Activated CD4-positive, alpha-beta memory T cell treated with anti-CD3 and anti-CD28 coated beads, Interleukin-2, amount 10 ng/mL, durations not matched to agents 7 days and 5 days (primary cell): ENCODE measurements at regions of chr6 and their contacts with region 1.

Region 1: GRCh38 chr6:137707590-137708360 is 159.3 kb upstream of the TNFAIP3 start:
- DNase-seq: peak; percentile 91
- H3K4me3 Mint-ChIP-seq: peak overlapping the region; percentile 59
- H3K27ac Mint-ChIP-seq: peak overlapping the region; percentile 86
- H3K4me1 Mint-ChIP-seq: peaks cover 71% of the 10 kb centered on the region
- H3K27me3 Mint-ChIP-seq: no peaks in the 10 kb centered on the region

Region 2: GRCh38 chr6:137656735-137657134 is 51.0 kb before region 1 on chr6:
- CTCF ChIA-PET with region 1: no interaction called
- POLR2A ChIA-PET with region 1: no interaction called
- DNase-seq: no peak
- H3K4me3 Mint-ChIP-seq: no peak overlapping the region
- H3K27ac Mint-ChIP-seq: peak overlapping the region; percentile 59
- H3K4me1 Mint-ChIP-seq: peaks cover 28% of the 10 kb centered on the region
- H3K27me3 Mint-ChIP-seq: no peaks in the 10 kb centered on the region

Region 3: DNA sequence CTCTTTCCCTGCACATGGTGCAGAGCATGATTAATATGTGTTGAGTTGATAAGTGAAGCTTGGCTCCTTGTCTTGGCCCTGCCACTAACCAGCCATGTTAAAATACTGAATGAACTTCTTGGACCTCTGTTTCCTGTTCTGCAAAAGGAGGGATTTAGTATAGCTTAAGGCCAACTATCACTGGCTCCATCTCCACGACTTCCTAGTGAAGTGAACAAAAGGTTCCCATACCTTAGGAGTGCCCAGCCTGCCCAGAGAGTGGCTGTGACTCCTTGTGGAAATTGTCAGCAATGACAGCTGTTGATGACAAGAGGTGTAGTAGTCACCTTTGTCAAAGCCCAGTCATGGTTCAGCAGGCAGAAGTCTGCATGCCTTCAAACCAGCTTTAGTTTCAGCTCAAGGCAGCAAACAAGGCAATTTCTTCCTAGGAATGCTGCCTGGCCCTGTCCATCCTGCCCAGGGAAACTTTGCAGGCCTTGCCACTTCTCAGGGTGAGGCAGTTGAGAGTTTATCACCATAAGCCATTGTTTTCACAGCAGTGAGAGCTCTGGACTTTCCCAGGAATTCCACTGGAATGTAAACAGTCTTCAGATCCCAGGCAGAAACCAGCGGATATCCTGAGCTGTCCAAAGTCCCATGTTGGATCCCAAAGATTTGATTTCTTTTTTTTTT is 10.4 kb before region 1 on chr6:
- CTCF ChIA-PET with region 1: interaction called, 7 read pairs
- POLR2A ChIA-PET with region 1: interaction called, 11 read pairs
- DNase-seq: no peak
- H3K4me3 Mint-ChIP-seq: no peak overlapping the region
- H3K27ac Mint-ChIP-seq: peak overlapping the region; percentile 52
- H3K4me1 Mint-ChIP-seq: peaks cover 53% of the 10 kb centered on the region
- H3K27me3 Mint-ChIP-seq: no peaks in the 10 kb centered on the region

Region 4: GRCh38 chr6:137938770-137939379 is 231.1 kb after region 1 on chr6:
- CTCF ChIA-PET with region 1: interaction called, 25 read pairs
- POLR2A ChIA-PET with region 1: interaction called, 5 read pairs
- DNase-seq: no peak
- H3K4me3 Mint-ChIP-seq: no peak overlapping the region
- H3K27ac Mint-ChIP-seq: peak overlapping the region; percentile 3
- H3K4me1 Mint-ChIP-seq: peaks cover 21% of the 10 kb centered on the region
- H3K27me3 Mint-ChIP-seq: no peaks in the 10 kb centered on the region

Region 5: DNA sequence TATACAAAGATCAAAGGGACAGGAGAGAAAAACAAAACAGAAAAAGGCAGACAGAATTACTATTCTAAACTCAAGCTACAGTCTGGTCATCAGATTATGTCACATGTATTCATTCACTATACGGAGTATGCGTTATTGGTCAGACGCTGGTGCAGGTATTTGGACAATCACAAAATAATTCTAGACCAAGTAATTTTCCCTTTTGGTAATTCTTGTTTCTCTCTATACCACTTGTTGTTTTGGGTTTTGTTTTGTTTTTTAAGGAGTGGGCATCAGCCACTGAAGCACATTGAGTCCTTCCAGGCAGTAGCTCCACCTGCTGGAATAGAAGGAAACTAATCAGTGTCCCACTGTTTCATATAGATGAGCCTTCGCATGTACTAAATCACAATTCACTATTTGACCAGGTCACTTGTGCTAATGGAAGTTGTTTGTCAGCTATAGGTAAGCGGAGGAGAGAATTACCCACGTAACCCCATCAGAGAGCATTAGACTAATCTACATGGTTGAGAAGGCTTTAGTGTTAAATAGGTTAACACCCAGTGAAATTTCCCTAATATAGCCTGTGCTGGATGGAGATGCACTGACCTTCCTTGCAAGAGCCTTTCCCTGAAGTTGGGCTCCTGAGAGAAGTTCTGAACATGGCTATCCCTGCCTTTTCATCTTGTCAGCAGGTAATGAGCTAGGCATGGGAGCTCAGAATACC is 237.2 kb after region 1 on chr6:
- CTCF ChIA-PET with region 1: interaction called, 25 read pairs
- POLR2A ChIA-PET with region 1: interaction called, 5 read pairs
- DNase-seq: no peak
- H3K4me3 Mint-ChIP-seq: no peak overlapping the region
- H3K27ac Mint-ChIP-seq: no peak overlapping the region
- H3K4me1 Mint-ChIP-seq: peaks cover 33% of the 10 kb centered on the region
- H3K27me3 Mint-ChIP-seq: no peaks in the 10 kb centered on the region

Region 6: DNA sequence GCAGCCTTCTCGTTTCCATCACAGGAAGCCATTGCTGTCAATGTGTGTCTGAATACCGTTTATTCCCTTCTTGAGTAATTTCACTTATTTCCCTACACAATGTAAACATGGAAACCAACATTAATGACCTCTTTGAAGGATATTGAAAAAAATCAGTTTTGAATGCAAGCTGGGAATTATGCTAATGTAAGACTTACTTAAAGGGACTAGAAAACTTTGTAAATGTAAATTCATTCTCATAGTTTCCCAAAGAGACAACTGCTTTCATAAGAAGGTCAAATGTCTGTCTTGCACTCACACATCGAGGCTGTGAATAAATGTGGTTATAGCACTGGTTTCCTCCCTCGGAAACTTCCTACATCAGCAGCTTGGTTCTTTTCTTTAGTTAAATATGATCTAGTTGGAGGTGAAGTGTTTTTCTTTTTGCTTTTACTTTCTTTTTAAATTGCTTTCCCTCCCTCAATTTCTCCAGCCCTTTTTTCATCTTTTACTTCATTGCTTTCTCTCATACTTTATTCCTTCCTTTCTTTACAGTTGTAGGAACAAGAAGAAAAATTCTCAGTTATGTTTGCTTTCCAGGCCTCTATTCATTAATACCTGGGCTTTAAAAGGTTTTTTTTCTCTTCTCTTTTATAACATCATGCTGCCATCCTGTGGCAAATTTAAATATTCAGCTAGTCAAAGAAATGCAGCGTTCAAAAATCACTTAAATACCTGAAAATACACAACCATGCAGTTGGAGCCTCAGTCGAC is 267.6 kb after region 1 on chr6:
- CTCF ChIA-PET with region 1: interaction called, 29 read pairs
- POLR2A ChIA-PET with region 1: interaction called, 14 read pairs
- DNase-seq: peak; percentile 35
- H3K4me3 Mint-ChIP-seq: peak overlapping the region; percentile 66
- H3K27ac Mint-ChIP-seq: peak overlapping the region; percentile 91
- H3K4me1 Mint-ChIP-seq: peaks cover 53% of the 10 kb centered on the region
- H3K27me3 Mint-ChIP-seq: no peaks in the 10 kb centered on the region

Region 7: DNA sequence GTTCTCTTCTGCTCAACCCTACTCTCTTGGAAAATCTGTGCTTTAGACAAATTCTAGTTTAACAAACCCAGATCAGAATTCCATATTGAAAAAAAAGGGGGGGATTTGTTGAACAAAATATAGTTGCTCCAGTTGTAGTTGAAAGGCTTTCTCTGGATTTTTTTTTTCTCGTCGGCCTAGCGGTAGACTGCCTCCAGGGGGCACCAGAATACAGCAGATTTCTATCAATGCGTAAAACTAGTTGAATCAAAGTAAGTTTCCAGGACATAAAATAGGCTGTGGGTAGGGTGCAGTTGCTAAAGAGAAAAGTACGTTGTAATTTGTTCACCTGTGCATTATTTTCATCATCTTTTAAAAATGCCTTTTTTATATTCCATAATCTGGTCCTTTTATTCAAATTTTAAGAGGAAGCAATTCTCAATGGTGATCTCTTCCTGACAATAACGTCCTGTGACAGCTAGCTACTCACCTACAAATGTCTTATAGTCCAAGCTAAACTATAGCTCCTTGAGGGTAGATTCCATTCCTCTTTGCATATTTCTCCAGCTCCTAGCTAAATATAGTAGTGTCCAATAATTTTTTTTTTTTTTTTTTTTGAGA is 294.1 kb after region 1 on chr6:
- CTCF ChIA-PET with region 1: interaction called, 22 read pairs
- POLR2A ChIA-PET with region 1: no interaction called
- DNase-seq: peak; percentile 65
- H3K4me3 Mint-ChIP-seq: no peak overlapping the region
- H3K27ac Mint-ChIP-seq: no peak overlapping the region
- H3K4me1 Mint-ChIP-seq: peaks cover 12% of the 10 kb centered on the region
- H3K27me3 Mint-ChIP-seq: no peaks in the 10 kb centered on the region

Region 8: DNA sequence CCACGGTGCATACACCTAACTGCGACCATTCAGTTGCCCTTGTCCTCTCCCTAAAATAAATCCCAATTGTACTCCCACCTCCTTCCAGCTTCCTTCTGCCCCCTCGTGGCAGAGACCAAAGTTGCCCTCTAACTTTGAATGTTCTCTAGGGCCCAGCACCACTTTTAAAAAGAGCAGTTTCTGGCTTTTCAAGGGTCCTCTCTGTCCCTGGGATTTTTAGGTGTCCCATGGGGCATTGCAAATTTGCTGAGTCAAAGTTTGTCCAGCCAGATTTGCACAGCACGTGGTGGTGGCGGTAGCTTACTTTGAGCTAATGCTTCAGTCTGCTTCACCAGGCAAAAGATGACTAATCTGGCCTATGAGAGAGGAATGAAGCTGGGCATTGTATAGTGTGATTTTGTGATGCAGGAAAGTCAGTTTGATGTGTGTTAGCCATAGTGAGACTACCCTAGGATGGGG is 299.3 kb after region 1 on chr6:
- CTCF ChIA-PET with region 1: interaction called, 22 read pairs
- POLR2A ChIA-PET with region 1: interaction called, 4 read pairs
- DNase-seq: peak; percentile 34
- H3K4me3 Mint-ChIP-seq: no peak overlapping the region
- H3K27ac Mint-ChIP-seq: no peak overlapping the region
- H3K4me1 Mint-ChIP-seq: peaks cover 14% of the 10 kb centered on the region
- H3K27me3 Mint-ChIP-seq: no peaks in the 10 kb centered on the region